Activated CD4-positive, alpha-beta T cell treated with anti-CD3 and anti-CD28 coated beads for 36 hours (primary cell): ENCODE measurements at regions of chr20 and their contacts with region 1.

Region 1: GRCh38 chr20:21505161-21505809 is 8.6 kb downstream of the NKX2-2 start:
- DNase-seq: peak; percentile 90
- ATAC-seq: peak; percentile 70
- H3K4me3 Mint-ChIP-seq: peak overlapping the region; percentile 52
- H3K27ac Mint-ChIP-seq: peak overlapping the region; percentile 8
- H3K4me1 Mint-ChIP-seq: peaks cover 25% of the 10 kb centered on the region
- H3K27me3 Mint-ChIP-seq: peaks cover 52% of the 10 kb centered on the region

Region 2: DNA sequence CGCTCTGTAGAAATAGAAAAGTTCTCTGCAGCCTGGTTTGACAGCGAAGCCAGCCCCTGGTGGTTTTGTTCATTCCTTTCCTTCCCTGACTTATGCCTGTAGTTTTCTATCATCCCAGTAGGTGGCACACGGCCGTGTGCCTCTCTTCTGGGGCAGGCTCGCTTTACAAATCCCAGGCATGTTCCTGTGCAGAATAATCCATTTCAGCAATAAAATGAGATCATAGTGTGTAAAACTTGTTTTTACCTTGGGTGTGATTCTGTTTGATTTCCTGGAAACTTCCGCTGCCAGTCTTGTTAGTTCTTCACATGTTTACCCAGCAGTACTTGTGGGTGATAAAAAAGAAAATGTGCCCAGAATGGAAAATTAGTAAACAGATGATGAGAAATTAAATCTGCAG is 1144.8 kb before region 1 on chr20:
- CTCF ChIA-PET with region 1: no interaction called
- POLR2A ChIA-PET with region 1: no interaction called
- intact Hi-C with region 1: loop called (anchors 5 to 10 kb)
- DNase-seq: peak; percentile 69
- ATAC-seq: peak; percentile 71
- H3K4me3 Mint-ChIP-seq: no peak overlapping the region
- H3K27ac Mint-ChIP-seq: no peak overlapping the region
- H3K4me1 Mint-ChIP-seq: peaks cover 27% of the 10 kb centered on the region
- H3K27me3 Mint-ChIP-seq: peaks cover 49% of the 10 kb centered on the region

Region 3: DNA sequence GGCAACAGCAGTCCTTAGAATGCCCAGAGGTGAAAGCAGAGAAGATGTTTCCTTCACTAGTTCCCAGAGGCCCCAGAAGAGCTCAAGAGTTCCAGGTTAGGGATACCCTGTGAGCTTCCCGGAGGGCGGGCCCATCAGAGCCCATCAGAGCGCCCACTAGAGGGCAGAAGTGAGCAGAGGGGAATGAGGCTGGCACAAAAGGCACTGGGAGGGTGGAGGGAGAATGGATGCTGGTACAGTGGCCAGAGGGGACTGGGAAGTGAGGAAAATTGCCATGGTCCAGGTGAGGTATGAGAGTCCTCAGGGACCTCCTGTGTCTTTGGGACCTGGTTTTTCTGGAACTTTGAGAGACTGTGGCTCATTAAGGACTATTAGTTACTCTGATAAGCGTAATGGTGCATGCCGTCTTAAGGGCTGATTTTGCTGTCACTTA is 456.4 kb before region 1 on chr20:
- CTCF ChIA-PET with region 1: interaction called, 5 read pairs
- POLR2A ChIA-PET with region 1: no interaction called
- intact Hi-C with region 1: loop called in 1 of 2 experiments (anchors 1 kb)
- DNase-seq: peak; percentile 74
- ATAC-seq: no peak
- H3K4me3 Mint-ChIP-seq: no peak overlapping the region
- H3K27ac Mint-ChIP-seq: no peak overlapping the region
- H3K4me1 Mint-ChIP-seq: no peaks in the 10 kb centered on the region
- H3K27me3 Mint-ChIP-seq: peaks cover 29% of the 10 kb centered on the region

Region 4: DNA sequence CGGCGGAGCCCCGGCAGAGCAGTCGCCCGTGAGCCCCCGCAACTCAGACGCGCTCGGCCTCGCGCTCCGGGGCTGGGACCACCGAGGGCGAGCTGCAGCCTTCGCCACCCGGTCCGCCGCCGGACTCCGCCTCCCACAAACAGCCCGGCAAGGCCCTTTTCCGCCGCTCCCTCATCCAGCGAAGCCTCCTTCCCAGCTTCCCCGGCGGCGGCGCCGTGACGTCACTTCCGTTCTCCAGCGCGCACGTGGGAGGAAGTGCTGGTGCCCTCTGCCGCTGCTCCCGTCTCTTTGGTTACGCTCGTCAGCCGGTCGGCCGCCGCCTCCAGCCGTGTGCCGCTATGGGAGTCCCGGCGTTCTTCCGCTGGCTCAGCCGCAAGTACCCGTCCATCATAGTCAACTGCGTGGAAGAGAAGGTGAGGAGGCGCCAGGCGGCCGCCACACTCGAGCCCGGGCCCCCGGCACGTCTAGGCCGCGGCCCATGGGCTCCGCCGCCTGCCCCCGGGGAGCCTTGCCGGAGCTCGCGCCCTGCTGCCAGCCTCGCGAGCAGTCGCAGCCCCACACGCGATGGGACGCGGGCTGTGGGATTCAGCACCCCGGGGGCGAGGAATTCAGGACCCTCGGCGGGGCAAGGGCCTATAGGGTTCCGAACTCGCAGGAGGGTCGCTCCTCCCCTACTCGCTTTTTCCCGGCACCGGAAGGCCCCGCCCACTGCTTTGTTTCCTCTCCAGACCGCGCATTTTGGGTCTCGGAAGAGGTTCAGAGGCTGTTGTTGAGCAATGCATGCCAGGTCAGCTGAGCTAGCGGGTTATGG is 202.0 kb before region 1 on chr20 and contains the start of gene XRN2:
- CTCF ChIA-PET with region 1: interaction called, 4 read pairs
- POLR2A ChIA-PET with region 1: no interaction called
- intact Hi-C with region 1: loop called (anchors 1 to 5 kb)
- DNase-seq: peak; percentile 98
- ATAC-seq: peak; percentile 85
- H3K4me3 Mint-ChIP-seq: peak within 1 kb of the TSS; percentile 93
- H3K27ac Mint-ChIP-seq: peak within 1 kb of the TSS; percentile 98
- H3K4me1 Mint-ChIP-seq: peaks cover 31% of the 10 kb centered on the region
- H3K27me3 Mint-ChIP-seq: no peaks in the 10 kb centered on the region
- total RNA-seq, gene XRN2: 87.1 to 88.4 TPM

Region 5: DNA sequence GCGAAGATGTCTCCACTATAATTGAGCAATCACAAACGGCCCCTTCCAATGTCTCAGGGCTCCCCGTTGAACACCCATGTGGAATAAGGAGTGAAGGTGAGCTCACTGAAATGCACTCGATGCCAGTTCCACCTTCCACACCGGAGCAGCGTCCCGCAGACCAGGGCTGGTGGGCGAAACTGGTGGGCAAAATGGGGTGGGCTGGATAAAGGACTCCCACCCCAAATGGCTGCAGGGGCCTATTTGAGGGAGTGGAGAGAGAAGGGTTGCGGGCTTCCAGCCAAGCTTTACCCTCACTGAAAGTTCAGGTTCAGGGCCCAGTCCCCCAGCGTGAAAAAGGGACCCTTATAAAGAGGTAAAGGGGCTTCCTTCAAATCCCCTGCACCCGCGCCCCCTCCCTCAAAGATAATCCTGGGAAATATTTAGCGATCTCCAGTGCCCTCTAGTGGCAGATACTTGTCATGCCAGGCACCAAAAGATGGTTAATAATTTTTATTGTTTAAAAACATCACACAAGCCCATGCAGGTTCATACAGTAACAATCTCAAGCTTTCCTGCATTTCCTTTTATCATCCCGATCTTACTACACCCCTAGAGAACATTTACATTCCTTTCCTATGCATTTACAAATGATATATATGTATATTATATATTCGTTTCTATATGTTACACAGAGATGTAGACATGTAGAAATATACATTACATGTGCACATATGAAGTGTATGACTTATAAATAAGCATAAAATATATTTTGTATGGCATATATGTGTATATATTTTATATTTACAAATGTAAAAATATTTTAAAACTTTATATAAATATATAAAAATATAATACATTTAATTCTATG is 66.8 kb after region 1 on chr20:
- CTCF ChIA-PET with region 1: interaction called, 6 read pairs
- POLR2A ChIA-PET with region 1: no interaction called
- intact Hi-C with region 1: loop called in 1 of 2 experiments (anchors 1 kb)
- DNase-seq: peak; percentile 25
- ATAC-seq: no peak
- H3K4me3 Mint-ChIP-seq: no peak overlapping the region
- H3K27ac Mint-ChIP-seq: no peak overlapping the region
- H3K4me1 Mint-ChIP-seq: peaks cover 6% of the 10 kb centered on the region
- H3K27me3 Mint-ChIP-seq: peaks cover 12% of the 10 kb centered on the region

Region 6: DNA sequence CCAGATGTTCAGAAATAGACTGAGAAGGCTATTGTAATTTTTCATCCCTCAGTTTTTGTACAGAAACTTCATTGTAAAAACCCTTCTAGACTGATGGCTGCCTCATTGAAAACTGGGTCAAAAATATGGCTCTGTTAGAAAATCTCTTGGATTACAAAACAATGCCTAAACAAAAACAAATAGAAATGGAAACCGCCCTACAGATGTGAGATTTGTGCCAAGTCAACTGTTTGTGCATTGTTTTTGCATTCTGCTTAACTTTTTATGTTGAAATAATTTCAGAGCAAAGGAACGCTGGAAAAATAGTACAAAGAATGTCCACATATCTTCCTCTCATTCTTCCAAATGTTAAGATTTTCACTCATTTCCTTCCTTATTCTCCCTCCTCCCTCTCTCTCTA is 654.0 kb after region 1 on chr20:
- CTCF ChIA-PET with region 1: no interaction called
- POLR2A ChIA-PET with region 1: no interaction called
- intact Hi-C with region 1: no loop called
- DNase-seq: no peak
- ATAC-seq: no peak
- H3K4me3 Mint-ChIP-seq: no peak overlapping the region
- H3K27ac Mint-ChIP-seq: no peak overlapping the region
- H3K4me1 Mint-ChIP-seq: no peaks in the 10 kb centered on the region
- H3K27me3 Mint-ChIP-seq: no peaks in the 10 kb centered on the region

Region 7: DNA sequence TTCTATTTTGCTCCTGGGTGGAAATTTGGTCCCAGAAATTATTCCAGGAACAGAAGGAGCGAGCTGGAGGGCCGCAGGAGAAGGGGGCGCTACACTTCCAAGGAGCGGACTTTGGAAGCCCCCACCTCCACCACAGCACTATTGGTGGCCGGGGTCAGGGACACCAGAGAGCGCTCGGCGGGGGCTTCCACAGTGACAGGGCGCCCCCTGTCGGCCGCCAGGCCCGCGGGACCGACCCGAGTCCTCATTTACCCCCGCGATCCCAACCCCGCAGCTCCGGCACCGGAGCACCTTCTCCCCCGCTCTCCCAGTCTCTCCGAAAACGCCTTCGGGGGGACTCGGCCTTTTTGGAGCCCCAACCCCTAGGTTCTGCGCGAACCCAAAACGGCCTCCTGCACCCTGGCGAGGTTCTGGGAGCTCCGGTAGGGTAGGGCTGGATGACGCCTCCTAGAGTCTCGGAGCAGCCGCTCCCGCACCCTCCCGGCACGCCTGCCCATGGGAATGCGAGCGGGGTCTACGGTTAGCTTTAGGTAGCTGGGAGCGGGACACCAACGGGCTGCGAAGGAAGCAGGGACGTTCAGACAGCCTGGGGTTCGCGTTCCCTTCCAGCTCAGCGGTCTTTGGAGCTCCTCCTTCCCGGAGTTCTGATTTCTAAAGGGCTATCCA is 1081.5 kb after region 1 on chr20:
- CTCF ChIA-PET with region 1: no interaction called
- POLR2A ChIA-PET with region 1: no interaction called
- intact Hi-C with region 1: loop called in 1 of 2 experiments (anchors 5 kb)
- DNase-seq: peak; percentile 59
- ATAC-seq: no peak
- H3K4me3 Mint-ChIP-seq: no peak overlapping the region
- H3K27ac Mint-ChIP-seq: no peak overlapping the region
- H3K4me1 Mint-ChIP-seq: no peaks in the 10 kb centered on the region
- H3K27me3 Mint-ChIP-seq: peaks cover 59% of the 10 kb centered on the region